Heart left ventricle (tissue), 16 donors: ENCODE measurements at regions of chr1 and their contacts with region 1.

Region 1: GRCh38 chr1:20569523-20570098 is 17.2 kb downstream of the FAM43B start:
- DNase-seq: no peak
- ATAC-seq: no peak
- H3K4me3 ChIP-seq: no peak overlapping the region
- H3K27ac ChIP-seq: no peak overlapping the region
- H3K4me1 ChIP-seq: no peaks in the 10 kb centered on the region
- H3K27me3 ChIP-seq: peaks cover 0 to 10% (median 0%) of the 10 kb centered on the region in 9 donors
- CTCF ChIP-seq: no peak
- POLR2A ChIP-seq: no peak

Region 2: DNA sequence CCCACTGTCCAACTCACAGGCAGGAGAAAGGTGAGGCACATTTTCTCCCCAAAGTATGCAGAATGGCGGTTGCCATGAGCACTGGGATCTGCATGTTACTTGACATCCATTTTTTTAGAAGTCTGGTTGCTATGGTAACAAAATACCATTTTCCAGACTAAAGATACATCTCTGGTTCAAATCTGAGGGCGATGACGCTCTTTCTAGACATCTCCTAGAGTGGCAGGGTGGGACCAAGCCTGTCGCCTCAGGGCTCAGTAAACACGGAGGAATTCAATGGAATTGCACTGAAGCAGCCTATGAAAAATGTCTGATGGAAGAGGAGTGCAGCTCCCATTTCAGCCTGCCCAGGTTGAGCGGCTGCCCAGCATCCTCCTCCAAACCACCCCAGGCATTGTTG is 38.7 kb before region 1 on chr1:
- intact Hi-C with region 1: loop called in 2 of 10 experiments (anchors 5 to 10 kb)
- DNase-seq: no peak
- ATAC-seq: no peak
- H3K4me3 ChIP-seq: no peak overlapping the region
- H3K27ac ChIP-seq: no peak overlapping the region
- H3K4me1 ChIP-seq: peaks cover 0 to 11% (median 5%) of the 10 kb centered on the region in 12 donors
- H3K27me3 ChIP-seq: peaks cover 0 to 28% (median 4%) of the 10 kb centered on the region in 9 donors
- CTCF ChIP-seq: no peak
- POLR2A ChIP-seq: no peak

Region 3: DNA sequence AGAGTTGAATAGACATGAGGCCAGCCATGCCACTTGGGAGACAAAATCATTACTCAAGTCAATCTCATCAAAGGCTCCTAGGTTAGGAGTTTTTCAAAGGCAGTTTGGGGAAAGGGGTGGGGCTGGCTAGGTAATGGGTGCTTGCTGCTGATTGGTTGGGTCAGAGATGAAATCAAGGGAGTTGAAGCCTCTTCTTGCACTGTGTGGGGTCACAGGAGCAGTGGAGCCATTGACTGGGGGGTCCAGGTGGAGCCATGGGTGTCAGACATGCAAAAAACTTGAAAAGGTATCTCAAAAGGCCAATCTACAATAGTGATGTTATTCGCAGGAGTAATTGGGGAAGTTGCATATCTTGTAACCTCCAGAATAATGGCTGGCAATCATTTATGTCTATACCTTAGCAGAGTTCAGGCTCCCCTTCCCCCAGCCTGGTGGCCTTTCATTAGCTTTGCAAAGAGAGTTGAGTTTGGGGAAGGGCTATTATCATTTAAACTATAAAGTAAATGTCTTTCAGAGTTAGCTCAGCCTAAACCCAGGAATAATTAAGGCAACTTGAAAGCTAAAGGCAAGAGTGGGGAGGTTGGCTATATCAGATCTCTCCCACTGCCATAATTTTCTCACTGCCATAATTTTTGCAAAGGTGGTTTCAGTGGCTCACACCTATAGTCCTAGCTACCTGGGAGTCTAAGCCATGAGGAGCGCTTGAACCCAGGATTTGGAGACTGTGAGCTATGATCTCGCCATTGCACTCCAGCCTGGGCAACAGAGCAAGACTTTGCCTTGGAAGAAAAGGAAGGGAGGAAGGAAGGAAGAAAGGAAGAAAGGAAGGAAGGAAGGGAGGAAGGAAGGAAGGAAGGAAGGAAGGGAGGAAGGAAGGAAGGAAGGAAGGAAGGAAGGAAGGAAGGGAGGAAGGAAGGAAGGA is 55.8 kb after region 1 on chr1:
- intact Hi-C with region 1: no loop called
- DNase-seq: no peak
- ATAC-seq: no peak
- H3K4me3 ChIP-seq: no peak overlapping the region
- H3K27ac ChIP-seq: no peak overlapping the region
- H3K4me1 ChIP-seq: no peaks in the 10 kb centered on the region
- H3K27me3 ChIP-seq: no peaks in the 10 kb centered on the region
- CTCF ChIP-seq: no peak
- POLR2A ChIP-seq: no peak